BJ (cell line): ENCODE measurements at regions of chr17 and their contacts with region 1.

Region 1: DNA sequence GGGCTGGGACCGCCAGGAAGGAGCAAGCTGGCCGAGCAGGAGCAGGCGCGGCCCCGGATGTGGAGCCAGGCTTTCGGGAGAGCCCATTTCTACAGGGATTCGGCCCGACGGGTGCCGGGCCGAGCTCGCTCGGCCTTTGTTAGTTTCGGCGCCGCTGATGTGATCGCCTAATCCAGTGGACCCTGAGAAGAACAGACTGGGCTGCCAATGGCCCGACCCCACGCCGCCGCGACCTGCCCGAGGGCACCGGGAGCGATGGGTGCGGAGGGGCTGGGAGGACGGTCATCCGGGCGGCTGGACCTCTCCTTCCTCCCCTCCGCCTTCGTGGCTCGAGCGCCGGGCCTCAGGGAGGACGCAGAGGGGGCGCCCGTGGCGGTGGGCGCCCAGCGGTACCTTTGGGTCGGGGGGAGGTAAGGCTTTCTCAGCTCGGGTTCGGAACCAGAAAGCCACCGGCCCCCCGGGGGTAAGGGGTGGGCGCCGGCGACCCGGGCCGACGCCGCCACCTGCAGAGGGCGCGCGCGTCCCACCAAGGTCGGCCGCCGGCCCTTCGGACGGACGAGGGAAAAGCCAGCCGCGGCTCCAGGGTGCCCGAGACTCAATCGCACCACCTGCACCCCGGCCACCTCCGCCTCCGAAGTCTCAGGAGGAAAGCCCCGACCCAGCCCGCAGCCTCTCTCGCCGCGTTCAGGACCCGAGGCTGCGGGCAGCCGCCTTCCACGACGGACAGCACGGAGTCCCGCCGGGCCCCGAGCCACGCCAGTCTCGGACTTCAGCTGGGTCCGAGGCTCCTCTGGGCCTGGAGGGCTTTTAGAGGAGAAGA is 7.1 kb downstream of the CBX8 start:
- DNase-seq: no peak
- H3K4me3 ChIP-seq: no peak overlapping the region
- H3K27me3 ChIP-seq: peaks cover 30% of the 10 kb centered on the region
- CTCF ChIP-seq: peak; percentile 41; the same call in 1 of the 2 replicates

Region 2: DNA sequence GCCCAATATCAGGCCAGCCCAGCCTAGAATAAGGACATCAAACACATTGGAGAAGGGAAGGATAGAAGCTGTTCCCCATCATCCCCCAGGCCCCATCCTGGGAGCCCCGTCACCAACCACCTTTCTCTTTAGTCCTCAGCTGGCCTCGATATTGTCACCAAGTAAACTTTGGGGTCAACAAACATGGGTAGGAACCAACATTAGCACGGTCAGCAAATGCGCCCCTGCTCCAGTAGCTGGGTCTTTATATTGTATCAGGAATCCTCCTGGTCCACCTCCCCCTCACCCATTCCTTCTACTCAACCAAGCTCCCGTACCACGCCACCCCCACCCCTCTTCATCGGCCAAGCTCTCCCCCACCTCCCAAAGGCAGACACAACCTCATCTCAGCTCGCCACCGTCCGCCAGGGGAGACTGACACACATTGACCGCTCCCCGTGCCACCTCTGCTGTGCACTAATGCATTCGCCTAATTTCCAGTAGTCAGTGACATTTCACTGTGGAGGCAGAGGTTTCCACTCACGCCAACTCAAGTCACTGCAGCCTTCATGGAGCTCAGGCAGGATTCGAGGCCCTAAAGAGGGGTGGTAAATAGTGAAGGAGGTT is 32.5 kb before region 1 on chr17:
- CTCF ChIA-PET with region 1: no interaction called
- POLR2A ChIA-PET with region 1: no interaction called
- DNase-seq: no peak
- H3K4me3 ChIP-seq: no peak overlapping the region
- H3K27me3 ChIP-seq: peaks cover 3% of the 10 kb centered on the region; the same call in 1 of the 2 replicates
- CTCF ChIP-seq: no peak

Region 3: DNA sequence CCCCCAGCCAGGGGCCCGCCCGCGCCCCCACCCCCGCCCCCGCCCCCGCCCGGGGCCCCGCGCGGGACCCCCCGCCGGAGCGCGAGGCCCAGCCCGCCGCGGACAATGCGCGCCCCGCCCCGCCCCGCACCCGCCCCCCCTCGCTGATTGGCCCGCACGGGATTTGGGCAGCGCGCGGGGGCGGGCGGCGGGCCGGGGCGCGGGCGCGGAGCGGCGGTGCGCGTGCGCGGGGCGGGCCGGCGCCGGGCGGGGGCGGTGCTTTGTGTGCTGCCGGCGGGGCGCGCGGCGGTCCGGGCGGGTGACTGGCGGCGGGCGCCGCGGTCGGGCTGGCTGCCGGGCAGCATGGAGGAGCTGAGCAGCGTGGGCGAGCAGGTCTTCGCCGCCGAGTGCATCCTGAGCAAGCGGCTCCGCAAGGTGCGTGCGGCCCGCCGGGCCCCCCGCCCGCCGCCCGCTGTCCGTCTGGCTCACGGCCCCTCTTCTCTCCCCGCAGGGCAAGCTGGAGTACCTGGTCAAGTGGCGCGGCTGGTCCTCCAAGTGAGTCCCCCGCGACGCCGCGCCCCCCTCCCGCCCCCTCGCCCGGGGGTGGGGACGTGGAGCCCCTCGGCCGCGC is 11.7 kb before region 1 on chr17 and contains the start of gene CBX2:
- CTCF ChIA-PET with region 1: interaction called, 15 read pairs
- POLR2A ChIA-PET with region 1: no interaction called
- DNase-seq: no peak
- H3K4me3 ChIP-seq: peak within 1 kb of the TSS; percentile 61
- H3K27me3 ChIP-seq: peaks cover 23% of the 10 kb centered on the region
- CTCF ChIP-seq: no peak
- polyA plus RNA-seq, gene CBX2: 0.74 and 1.5 TPM in 2 replicates

Region 4: DNA sequence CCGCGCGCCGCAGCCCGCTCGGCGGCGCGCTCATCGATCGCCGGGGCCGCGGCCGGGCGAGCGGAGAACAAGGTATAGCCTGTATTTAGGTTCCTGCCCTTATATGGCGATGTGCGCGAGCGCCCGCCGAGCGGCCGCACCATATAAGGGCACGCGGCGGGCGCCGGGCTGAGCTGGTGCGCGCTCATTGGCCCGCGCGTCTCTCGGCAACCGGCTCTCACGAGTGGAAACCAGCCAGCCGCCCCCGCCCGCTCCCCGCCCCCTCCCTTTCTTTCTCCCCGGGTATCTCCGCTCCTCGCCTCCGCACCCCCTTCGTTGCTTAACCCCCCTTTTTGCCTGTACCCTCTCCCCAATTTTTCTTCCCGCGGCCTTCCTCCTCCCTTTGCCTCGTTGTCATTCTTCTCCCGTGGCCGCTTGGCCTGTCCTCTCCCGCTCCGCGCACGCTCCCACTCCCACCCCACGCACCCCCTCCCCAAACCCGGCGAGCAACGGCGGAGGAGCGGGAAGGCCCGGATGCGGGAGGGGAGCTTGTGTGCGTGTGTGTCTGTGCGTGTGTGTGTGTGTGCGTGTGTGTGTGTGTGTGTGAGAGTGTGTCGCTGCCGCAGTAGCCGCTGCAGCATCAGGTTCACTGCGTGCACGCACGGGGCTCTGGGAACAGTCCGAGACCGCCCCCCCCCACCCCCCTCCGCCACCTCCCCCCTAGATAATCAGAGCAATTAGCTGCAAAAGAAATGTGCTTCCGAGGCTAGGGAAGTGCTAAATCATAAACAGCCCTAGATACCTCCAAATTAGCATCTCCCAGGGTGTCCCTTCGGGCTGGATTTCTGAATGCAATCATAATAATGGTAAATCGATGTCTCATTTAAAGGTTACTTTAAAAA is 20.6 kb after region 1 on chr17:
- CTCF ChIA-PET with region 1: interaction called, 17 read pairs
- POLR2A ChIA-PET with region 1: no interaction called
- DNase-seq: no peak
- H3K4me3 ChIP-seq: no peak overlapping the region
- H3K27me3 ChIP-seq: peaks cover 74% of the 10 kb centered on the region
- CTCF ChIP-seq: no peak

Region 5: DNA sequence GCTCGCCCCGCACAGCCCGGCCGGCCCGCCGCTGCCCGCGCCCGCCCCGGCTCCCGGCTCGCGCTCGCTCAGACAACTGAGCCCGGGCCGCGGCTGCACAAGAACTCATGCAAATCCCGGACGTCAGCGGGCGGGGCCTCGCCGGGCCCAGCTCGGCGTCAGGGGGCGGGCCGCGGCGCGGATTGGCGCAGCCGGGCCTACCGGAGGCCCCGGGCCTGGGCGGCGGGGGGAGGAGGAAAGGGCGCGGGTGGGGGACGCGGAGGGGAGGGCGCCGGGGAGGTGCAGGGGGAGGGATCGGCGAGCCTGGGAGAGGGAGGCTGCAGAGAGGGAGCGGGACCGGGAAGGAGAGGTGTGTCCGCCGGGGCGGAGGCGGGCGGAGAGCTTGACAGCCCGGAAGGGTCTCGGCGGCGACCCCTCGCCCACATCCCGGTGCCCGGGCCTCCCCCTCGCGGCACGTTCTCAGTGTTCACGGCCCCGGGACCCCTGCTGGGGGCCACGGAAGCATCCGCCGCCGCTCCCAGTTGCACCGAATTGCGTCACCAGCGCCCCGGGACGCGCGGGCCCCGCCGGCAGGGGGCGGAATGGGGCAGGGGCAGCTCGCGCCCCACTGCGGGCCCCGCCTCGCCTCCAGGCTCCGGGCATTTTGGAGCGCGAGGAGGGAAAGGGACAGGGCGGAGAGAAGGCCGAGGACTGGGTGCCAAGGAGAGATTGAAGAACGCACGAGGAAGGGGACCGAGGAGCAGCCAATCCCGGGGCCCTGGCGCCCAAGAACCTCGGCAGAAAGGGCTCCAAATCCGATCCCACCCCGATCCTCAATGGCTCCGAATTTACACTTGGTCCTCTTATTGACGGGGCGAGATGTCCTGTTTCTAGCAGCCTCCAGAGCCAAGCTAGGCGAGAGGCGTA is 49.9 kb after region 1 on chr17 and contains the start of gene CBX4:
- CTCF ChIA-PET with region 1: interaction called, 24 read pairs
- POLR2A ChIA-PET with region 1: interaction called, 3 read pairs
- DNase-seq: peak; percentile 48
- H3K4me3 ChIP-seq: peak within 1 kb of the TSS; percentile 65
- H3K27me3 ChIP-seq: peaks cover 25% of the 10 kb centered on the region
- CTCF ChIP-seq: peak; percentile 53
- polyA plus RNA-seq, gene CBX4: 8.0 and 10.4 TPM in 2 replicates

Region 6: GRCh38 chr17:79915850-79916430 is 126.2 kb after region 1 on chr17:
- CTCF ChIA-PET with region 1: interaction called, 19 read pairs
- POLR2A ChIA-PET with region 1: no interaction called
- DNase-seq: no peak
- H3K4me3 ChIP-seq: no peak overlapping the region
- H3K27me3 ChIP-seq: peaks cover 6% of the 10 kb centered on the region
- CTCF ChIP-seq: peak; percentile 39

Region 7: GRCh38 chr17:79951361-79952264 is 161.9 kb after region 1 on chr17:
- CTCF ChIA-PET with region 1: no interaction called
- POLR2A ChIA-PET with region 1: no interaction called
- DNase-seq: peak; percentile 23
- H3K4me3 ChIP-seq: no peak overlapping the region
- H3K27me3 ChIP-seq: no peaks in the 10 kb centered on the region
- CTCF ChIP-seq: no peak

Region 8: GRCh38 chr17:79991140-79991923 is 201.6 kb after region 1 on chr17:
- CTCF ChIA-PET with region 1: interaction called, 13 read pairs
- POLR2A ChIA-PET with region 1: no interaction called
- DNase-seq: no peak
- H3K4me3 ChIP-seq: peak overlapping the region; percentile 36
- H3K27me3 ChIP-seq: no peaks in the 10 kb centered on the region
- CTCF ChIP-seq: peak; percentile 71